ENCODE measurements at regions of chr1 and their contacts with region 1.

Region 1: GRCh38 chr1:206725109-206725963 is 40.6 kb downstream of the MAPKAPK2 start:
- DNase-seq: peak in 8 of 9 donors; percentile 35 to 64 (median 58)
- ATAC-seq: peak; percentile 61
- H3K4me3 ChIP-seq: no peak overlapping the region
- H3K4me3 Mint-ChIP-seq: no peak overlapping the region
- H3K27ac ChIP-seq: no peak overlapping the region
- H3K27ac Mint-ChIP-seq: peak overlapping the region in 8 of 9 donors; percentile 19 to 90 (median 58)
- H3K4me1 ChIP-seq: peaks cover 17 to 25% of the 10 kb centered on the region in 2 donors
- H3K4me1 Mint-ChIP-seq: peaks cover 29 to 50% (median 46%) of the 10 kb centered on the region in 7 donors
- H3K27me3 ChIP-seq: no peaks in the 10 kb centered on the region
- H3K27me3 Mint-ChIP-seq: no peaks in the 10 kb centered on the region

Region 2: DNA sequence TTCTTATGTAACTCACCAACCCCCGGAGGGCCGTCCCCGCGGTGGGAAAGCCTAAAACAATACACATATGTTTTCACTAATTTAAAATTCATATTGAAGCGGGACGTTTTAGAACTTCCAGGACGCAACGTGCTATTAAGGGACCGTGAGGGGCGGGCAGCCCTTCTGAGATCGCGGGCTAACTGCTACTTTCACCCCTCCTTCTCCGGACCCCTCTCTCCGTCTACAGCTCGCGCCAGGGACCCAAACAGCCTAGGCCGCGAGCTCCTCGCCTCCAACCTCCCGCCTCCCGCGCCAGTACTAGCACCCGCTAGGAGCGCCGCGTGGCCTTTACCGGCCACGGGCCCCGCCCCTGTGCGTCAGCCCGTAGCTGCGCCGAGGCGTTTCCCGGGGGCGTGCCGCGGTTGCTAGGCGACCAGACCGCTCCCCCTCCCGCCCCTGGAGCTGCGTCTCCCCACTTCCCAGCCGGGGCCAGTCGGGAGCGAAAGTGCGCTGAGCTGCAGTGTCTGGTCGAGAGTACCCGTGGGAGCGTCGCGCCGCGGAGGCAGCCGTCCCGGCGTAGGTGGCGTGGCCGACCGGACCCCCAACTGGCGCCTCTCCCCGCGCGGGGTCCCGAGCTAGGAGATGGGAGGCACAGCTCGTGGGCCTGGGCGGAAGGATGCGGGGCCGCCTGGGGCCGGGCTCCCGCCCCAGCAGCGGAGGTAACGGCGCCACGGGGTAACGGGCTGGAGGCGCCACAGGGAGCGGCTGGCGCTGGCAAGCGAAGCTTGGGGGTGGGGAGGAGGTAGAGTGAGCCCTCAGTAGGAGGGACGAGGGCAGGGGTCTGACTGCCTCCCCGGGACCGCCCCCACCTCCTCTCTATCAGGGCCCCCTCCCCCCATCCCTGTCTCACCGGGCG is 90.0 kb before region 1 on chr1 and contains the start of gene DYRK3:
- CTCF ChIA-PET with region 1: interaction called, 4 read pairs
- POLR2A ChIA-PET with region 1: no interaction called
- intact Hi-C with region 1: loop called in 1 of 2 experiments (anchors 5 kb)
- DNase-seq: peak; percentile 71 to 98 (median 80)
- ATAC-seq: peak; percentile 97
- H3K4me3 ChIP-seq: peak within 1 kb of the TSS; percentile 67
- H3K4me3 Mint-ChIP-seq: peak within 1 kb of the TSS; percentile 85 to 96 (median 90)
- H3K27ac ChIP-seq: peak within 1 kb of the TSS; percentile 57
- H3K27ac Mint-ChIP-seq: peak within 1 kb of the TSS; percentile 64 to 93 (median 85)
- H3K4me1 ChIP-seq: peaks cover 8 to 16% of the 10 kb centered on the region in 2 donors
- H3K4me1 Mint-ChIP-seq: peaks cover 14 to 29% (median 18%) of the 10 kb centered on the region in 7 donors
- H3K27me3 ChIP-seq: no peaks in the 10 kb centered on the region
- H3K27me3 Mint-ChIP-seq: peaks cover 7 to 13% (median 9%) of the 10 kb centered on the region in 5 donors
- total RNA-seq, gene DYRK3: 0.22 to 8.2 (median 0.69) TPM

Region 3: DNA sequence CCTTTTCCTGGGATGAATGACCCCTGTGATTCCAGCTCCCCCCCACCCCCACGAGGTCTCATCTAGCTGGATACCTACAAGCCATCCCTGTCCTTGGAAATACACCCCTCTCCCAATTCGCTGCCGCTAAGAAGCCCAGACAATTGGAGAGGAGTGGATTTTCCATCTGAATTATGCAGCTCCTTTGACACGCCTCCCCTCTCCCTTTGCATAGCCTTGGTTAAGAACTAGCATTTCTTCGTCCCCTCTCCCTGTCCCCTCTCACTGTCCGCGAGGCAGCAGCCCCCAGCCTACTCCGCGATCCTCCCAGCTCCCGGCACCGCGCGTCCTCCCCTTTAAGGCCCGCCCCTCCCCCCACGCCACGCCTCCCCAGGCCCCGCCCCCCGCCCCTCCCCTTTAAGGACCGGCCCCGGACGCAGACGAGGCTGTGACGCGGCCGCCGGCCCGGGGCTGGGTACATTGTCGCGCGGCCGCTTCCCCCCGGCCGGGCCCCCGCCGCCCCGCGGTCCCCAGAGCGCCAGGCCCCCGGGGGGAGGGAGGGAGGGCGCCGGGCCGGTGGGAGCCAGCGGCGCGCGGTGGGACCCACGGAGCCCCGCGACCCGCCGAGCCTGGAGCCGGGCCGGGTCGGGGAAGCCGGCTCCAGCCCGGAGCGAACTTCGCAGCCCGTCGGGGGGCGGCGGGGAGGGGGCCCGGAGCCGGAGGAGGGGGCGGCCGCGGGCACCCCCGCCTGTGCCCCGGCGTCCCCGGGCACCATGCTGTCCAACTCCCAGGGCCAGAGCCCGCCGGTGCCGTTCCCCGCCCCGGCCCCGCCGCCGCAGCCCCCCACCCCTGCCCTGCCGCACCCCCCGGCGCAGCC is 40.6 kb before region 1 on chr1 and contains the start of gene MAPKAPK2:
- CTCF ChIA-PET with region 1: interaction called, 3 read pairs
- POLR2A ChIA-PET with region 1: no interaction called
- intact Hi-C with region 1: loop called (anchors 1 to 2 kb)
- DNase-seq: peak; percentile 52 to 80 (median 71)
- ATAC-seq: peak; percentile 85
- H3K4me3 ChIP-seq: peak within 1 kb of the TSS; percentile 66
- H3K4me3 Mint-ChIP-seq: peak within 1 kb of the TSS; percentile 92 to 100 (median 96)
- H3K27ac ChIP-seq: peak within 1 kb of the TSS; percentile 90
- H3K27ac Mint-ChIP-seq: peak within 1 kb of the TSS; percentile 90 to 98 (median 95)
- H3K4me1 ChIP-seq: peaks cover 12 to 21% of the 10 kb centered on the region in 2 donors
- H3K4me1 Mint-ChIP-seq: peaks cover 23 to 49% (median 38%) of the 10 kb centered on the region in 7 donors
- H3K27me3 ChIP-seq: no peaks in the 10 kb centered on the region
- H3K27me3 Mint-ChIP-seq: peaks cover 0 to 17% (median 0%) of the 10 kb centered on the region in 5 donors
- total RNA-seq, gene MAPKAPK2: 49.6 to 123 (median 80.5) TPM

Region 4: GRCh38 chr1:206803221-206803730 is 77.9 kb after region 1 on chr1:
- CTCF ChIA-PET with region 1: interaction called, 329 read pairs
- POLR2A ChIA-PET with region 1: interaction called, 148 read pairs
- intact Hi-C with region 1: loop called (anchors 1 kb)
- DNase-seq: peak; percentile 42 to 96 (median 93)
- ATAC-seq: peak; percentile 97
- H3K4me3 ChIP-seq: no peak overlapping the region
- H3K4me3 Mint-ChIP-seq: peak overlapping the region in 9 of 10 donors; percentile 32 to 71 (median 57)
- H3K27ac ChIP-seq: peak overlapping the region; percentile 81
- H3K27ac Mint-ChIP-seq: peak overlapping the region; percentile 83 to 99 (median 95)
- H3K4me1 ChIP-seq: peaks cover 34 to 41% of the 10 kb centered on the region in 2 donors
- H3K4me1 Mint-ChIP-seq: peaks cover 29 to 78% (median 77%) of the 10 kb centered on the region in 7 donors
- H3K27me3 ChIP-seq: no peaks in the 10 kb centered on the region
- H3K27me3 Mint-ChIP-seq: peaks cover 0 to 44% (median 0%) of the 10 kb centered on the region in 5 donors

Region 5: DNA sequence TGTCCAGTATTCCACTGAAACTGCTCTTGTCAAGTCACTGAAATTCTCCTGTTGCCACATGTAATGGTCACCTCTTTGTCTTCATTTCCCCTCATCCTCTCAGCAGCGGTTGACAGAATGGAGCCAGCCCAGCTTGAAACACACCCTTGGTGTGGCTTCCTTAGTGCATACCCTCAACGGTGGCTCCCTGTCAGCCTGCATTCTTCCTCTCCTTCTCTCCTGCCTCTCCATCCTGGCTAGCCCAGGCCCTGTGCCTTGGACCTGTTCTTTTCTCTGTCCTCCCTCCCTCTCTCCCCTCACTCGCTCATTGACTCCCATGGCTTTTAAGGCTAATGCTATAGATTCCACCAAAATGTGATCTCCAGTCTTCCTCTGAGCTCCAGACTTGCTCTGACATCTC is 192.7 kb after region 1 on chr1:
- CTCF ChIA-PET with region 1: interaction called, 25 read pairs
- POLR2A ChIA-PET with region 1: interaction called, 13 read pairs
- intact Hi-C with region 1: no loop called
- DNase-seq: no peak
- ATAC-seq: no peak
- H3K4me3 ChIP-seq: peak overlapping the region; percentile 76
- H3K4me3 Mint-ChIP-seq: peak overlapping the region in 1 of 10 donors; percentile 75
- H3K27ac ChIP-seq: peak overlapping the region; percentile 90
- H3K27ac Mint-ChIP-seq: peak overlapping the region in 5 of 9 donors; percentile 12 to 94 (median 91)
- H3K4me1 ChIP-seq: peaks cover 55% of the 10 kb centered on the region in 2 donors
- H3K4me1 Mint-ChIP-seq: peaks cover 54 to 80% (median 57%) of the 10 kb centered on the region in 7 donors
- H3K27me3 ChIP-seq: no peaks in the 10 kb centered on the region
- H3K27me3 Mint-ChIP-seq: no peaks in the 10 kb centered on the region

Region 6: GRCh38 chr1:207004981-207005830 is 279.9 kb after region 1 on chr1:
- CTCF ChIA-PET with region 1: interaction called, 4 read pairs
- POLR2A ChIA-PET with region 1: no interaction called
- intact Hi-C with region 1: loop called in 1 of 2 experiments (anchors 1 kb)
- DNase-seq: peak in 5 of 9 donors; percentile 7 to 28 (median 22)
- ATAC-seq: peak; percentile 67
- H3K4me3 ChIP-seq: no peak overlapping the region
- H3K4me3 Mint-ChIP-seq: peak overlapping the region in 1 of 10 donors; percentile 53
- H3K27ac ChIP-seq: no peak overlapping the region
- H3K27ac Mint-ChIP-seq: peak overlapping the region in 1 of 9 donors; percentile 36
- H3K4me1 ChIP-seq: no peaks in the 10 kb centered on the region
- H3K4me1 Mint-ChIP-seq: peaks cover 0 to 8% (median 4%) of the 10 kb centered on the region in 7 donors
- H3K27me3 ChIP-seq: no peaks in the 10 kb centered on the region
- H3K27me3 Mint-ChIP-seq: peaks cover 0 to 26% (median 6%) of the 10 kb centered on the region in 5 donors

Region 7: DNA sequence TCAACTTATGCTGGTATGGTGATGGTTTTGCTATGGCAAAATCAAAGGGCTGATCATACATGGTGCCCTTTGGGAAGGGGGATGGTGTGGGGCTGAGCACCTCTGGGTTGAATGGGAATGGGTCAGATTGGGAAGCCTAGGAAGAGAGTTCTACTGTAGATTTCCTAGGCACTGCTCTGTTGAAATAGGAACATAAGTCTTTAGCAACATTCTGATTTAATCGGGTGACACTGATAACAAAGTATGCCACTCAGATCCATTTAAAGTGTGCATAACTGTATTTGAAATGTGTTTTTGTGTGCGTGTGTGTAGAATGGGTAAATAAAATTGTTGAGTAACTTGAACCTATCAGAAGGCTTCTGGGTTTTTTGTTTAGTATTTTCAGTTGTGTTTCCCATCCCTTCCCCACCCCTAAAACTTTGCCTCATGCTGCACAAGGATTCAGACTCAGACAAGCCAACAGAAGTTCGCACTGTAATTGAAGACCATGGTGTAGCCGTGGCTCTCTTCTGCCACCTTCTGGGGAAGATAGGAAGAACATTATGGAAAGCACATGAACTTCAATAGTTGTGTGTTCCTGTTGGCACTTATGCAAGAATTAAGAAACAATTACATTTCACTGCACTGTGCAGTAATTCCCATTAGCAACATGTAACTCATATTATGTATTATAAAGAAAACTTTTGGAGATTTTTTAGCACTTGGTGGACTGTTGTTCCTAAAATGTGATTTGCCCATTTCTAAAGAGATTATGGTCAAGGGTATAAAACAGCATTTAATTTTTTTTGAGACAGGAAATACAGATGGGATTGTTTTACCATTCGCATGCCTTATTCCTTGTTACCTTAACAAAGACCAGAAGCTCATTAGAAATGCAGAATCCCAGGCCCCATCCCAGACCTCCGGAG is 352.4 kb after region 1 on chr1:
- CTCF ChIA-PET with region 1: no interaction called
- POLR2A ChIA-PET with region 1: no interaction called
- intact Hi-C with region 1: loop called in 1 of 2 experiments (anchors 2 kb)
- DNase-seq: peak; percentile 21 to 85 (median 78)
- ATAC-seq: peak; percentile 98
- H3K4me3 ChIP-seq: no peak overlapping the region
- H3K4me3 Mint-ChIP-seq: no peak overlapping the region
- H3K27ac ChIP-seq: no peak overlapping the region
- H3K27ac Mint-ChIP-seq: peak overlapping the region in 3 of 9 donors; percentile 5 to 63 (median 28)
- H3K4me1 ChIP-seq: no peaks in the 10 kb centered on the region
- H3K4me1 Mint-ChIP-seq: peaks cover 0 to 14% (median 5%) of the 10 kb centered on the region in 7 donors
- H3K27me3 ChIP-seq: no peaks in the 10 kb centered on the region
- H3K27me3 Mint-ChIP-seq: peaks cover 0 to 52% (median 0%) of the 10 kb centered on the region in 5 donors

Measured in naive thymus-derived CD4-positive, alpha-beta T cell (primary cell).